CD14-positive monocyte (primary cell): ENCODE measurements at regions of chr14 and their contacts with region 1.

Region 1: DNA sequence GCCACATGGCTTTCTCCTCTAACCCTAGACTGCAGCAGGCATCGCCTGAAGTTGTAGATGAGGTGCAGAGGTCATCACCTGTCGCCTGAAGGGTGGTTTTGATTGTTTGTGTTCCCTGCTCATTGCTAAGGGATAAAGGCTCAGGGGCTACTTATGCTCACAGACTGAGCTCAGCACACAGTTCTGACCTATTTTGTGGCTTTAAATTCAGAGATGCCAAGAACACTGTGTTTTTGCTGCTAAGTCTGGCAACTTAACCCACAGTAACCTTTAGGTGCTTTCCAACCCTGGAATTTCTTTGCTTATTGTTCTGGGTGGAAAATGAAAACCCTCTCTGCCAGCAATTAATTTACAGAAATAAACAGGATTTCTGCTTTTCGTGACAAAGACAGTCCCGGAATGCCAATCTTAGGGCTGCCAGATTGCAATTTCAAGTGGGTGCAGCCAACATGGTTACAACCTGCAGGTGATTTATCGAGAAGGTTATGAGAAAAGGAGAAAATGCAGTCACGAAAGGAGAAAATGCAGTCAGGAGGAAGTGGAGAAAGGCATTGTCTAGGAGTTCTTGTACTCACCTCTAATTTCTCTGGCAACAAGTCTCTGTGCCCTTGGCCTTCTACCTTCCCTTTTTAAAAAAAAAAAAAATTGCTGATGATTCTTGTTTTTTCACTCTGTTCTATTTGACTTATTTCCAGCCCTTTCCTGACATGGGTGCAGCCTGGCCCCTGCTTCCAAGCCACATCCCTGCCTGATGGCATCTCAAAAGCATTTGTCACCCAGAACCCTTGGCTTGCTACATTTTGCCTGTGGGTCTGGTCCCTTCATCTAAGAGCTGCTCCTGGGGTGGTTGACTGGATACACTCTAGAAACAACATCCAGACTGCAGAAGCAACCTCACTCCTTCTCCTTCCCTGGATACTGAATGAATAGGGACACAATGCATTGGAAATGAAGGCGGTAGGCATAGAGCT is 23.3 kb downstream of the NPC2 start:
- DNase-seq: no peak
- H3K4me3 ChIP-seq: no peak overlapping the region
- H3K4me3 Mint-ChIP-seq: no peak overlapping the region
- H3K27ac ChIP-seq: no peak overlapping the region
- H3K27ac Mint-ChIP-seq: no peak overlapping the region
- H3K4me1 ChIP-seq: peaks cover 4 to 5% of the 10 kb centered on the region in 2 donors
- H3K4me1 Mint-ChIP-seq: peaks cover 11% of the 10 kb centered on the region
- H3K27me3 ChIP-seq: no peaks in the 10 kb centered on the region
- H3K27me3 Mint-ChIP-seq: peaks cover 0 to 2% (median 2%) of the 10 kb centered on the region in 3 donors
- CTCF ChIP-seq: no peak

Region 2: DNA sequence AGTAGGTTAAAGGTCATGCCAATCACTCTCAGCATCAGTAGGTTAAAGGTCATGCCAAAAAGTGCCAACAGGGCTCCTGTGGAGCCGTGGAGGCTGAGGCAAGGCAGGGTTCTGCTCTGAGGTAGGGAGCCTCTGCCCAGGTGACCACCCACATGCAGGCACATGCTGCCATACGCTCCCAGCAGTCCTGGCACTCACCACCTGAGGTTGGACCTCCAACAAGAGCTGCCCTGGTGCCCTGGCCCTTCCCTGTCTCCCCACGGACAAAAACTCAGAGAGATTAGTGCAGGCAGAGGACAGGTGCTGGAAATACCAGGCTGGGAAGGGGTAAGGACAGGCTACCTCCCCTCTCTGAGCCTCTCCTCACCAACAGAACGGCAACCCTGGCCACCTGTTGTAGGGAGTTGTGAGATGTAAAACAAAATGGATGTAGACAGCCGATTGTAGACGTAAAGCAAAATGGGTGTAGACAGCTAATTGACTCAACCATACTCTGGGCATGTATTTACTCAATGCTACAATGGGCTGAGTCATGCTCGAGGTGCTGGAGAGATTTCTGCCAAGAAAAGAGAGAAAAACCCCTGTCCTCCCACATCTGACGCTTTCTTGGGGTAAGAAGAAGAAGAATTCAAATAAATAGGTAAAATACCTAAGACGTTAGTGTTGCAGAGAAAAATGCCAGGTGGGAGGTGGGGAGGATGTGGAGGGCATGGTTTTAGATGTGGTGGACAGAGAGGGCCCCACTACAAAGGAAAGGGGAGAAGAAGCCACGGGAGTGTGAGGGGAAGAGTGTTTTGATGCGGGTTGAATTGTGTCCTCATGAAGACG is 109.8 kb after region 1 on chr14:
- intact Hi-C with region 1: loop called in 1 of 2 experiments (anchors 5 kb)
- DNase-seq: no peak
- H3K4me3 ChIP-seq: no peak overlapping the region
- H3K4me3 Mint-ChIP-seq: no peak overlapping the region
- H3K27ac ChIP-seq: no peak overlapping the region
- H3K27ac Mint-ChIP-seq: peak overlapping the region in 1 of 7 donors; percentile 21
- H3K4me1 ChIP-seq: peaks cover 6 to 9% of the 10 kb centered on the region in 2 donors
- H3K4me1 Mint-ChIP-seq: peaks cover 6% of the 10 kb centered on the region
- H3K27me3 ChIP-seq: no peaks in the 10 kb centered on the region
- H3K27me3 Mint-ChIP-seq: peaks cover 0 to 11% (median 5%) of the 10 kb centered on the region in 3 donors
- CTCF ChIP-seq: no peak